A673 (cell line): ENCODE measurements at regions of chr4 and their contacts with region 1.

Region 1: GRCh38 chr4:175560604-175561003 is 251.5 kb downstream of the GPM6A start:
- DNase-seq: peak; percentile 48
- H3K4me3 ChIP-seq: no peak overlapping the region
- H3K27ac ChIP-seq: no peak overlapping the region
- H3K4me1 ChIP-seq: no peaks in the 10 kb centered on the region
- H3K27me3 ChIP-seq: peaks cover 6% of the 10 kb centered on the region
- CTCF ChIP-seq: peak; percentile 56

Region 2: DNA sequence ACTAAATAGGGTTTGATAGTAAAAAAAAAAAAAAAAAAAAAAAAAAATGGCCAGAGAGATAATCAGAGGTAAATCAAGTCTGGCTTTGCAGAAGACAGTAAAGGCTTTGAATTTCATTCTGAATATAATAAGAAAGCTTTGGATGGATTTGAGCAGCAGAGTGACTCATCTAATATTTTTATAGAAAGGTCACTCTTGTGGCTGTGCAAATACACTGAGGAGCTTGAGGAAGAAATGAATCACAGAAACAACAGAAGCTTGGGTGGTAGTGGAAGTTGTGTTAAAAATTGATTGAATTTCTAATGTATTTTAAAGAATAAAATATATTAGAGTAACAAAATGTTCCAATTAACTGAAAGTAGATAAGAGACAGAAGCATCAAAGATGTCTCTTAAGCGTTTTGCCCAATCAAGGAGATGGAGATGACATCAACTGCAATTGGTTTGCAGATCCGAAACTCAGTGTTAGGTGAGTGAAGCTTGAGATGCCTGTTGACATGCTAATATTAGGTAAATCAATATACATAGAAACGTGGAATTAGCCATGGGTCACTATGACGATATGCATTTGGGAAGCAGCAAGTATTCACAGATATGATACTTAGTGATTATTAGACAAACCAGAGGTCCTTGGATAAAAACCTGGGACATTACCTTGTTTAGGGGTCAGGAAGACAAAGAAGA is 29.1 kb before region 1 on chr4:
- CTCF ChIA-PET with region 1: no interaction called
- POLR2A ChIA-PET with region 1: no interaction called
- intact Hi-C with region 1: no loop called
- DNase-seq: no peak
- H3K4me3 ChIP-seq: no peak overlapping the region
- H3K27ac ChIP-seq: no peak overlapping the region
- H3K4me1 ChIP-seq: no peaks in the 10 kb centered on the region
- H3K27me3 ChIP-seq: no peaks in the 10 kb centered on the region
- CTCF ChIP-seq: no peak

Region 3: GRCh38 chr4:175791221-175791620 is 230.6 kb after region 1 on chr4:
- CTCF ChIA-PET with region 1: no interaction called
- POLR2A ChIA-PET with region 1: no interaction called
- intact Hi-C with region 1: no loop called
- DNase-seq: no peak
- H3K4me3 ChIP-seq: no peak overlapping the region
- H3K27ac ChIP-seq: no peak overlapping the region
- H3K4me1 ChIP-seq: no peaks in the 10 kb centered on the region
- H3K27me3 ChIP-seq: no peaks in the 10 kb centered on the region
- CTCF ChIP-seq: no peak

Region 4: DNA sequence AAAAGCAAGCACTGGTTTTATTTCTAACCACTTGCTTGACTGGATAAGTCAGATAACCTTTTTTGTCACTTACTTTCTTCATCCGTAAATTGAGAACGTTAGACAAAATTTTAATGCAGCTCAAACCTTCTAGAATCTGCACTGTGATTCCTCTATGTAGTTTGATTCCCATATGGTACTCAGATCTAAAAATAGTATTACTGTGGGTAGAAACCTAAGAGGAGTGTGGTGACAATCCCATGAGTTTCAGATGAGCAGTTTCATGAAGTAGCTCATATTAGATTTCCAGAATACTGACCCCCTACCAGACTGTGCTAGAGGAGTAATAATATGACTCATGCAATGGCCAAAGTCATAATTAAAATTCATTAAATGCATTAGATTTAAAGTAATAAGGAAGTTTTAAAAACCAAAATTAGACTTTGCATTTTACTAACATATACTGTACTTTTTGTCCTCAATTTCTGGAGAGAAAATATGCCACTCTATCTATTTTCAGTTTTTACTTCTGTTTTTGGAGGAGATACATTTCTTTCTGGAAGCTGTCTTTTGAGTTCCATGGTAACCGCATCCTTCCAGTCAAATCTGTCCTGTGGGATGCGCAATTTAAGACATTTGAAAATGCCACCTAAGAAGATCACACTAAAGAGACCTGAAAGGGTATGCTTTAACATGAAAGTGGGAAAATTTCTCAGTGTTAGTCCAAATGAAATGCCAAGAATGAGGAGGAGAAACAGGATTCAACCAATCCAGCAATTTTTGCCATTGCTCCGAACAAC is 315.6 kb after region 1 on chr4:
- CTCF ChIA-PET with region 1: no interaction called
- POLR2A ChIA-PET with region 1: no interaction called
- intact Hi-C with region 1: no loop called
- DNase-seq: no peak
- H3K4me3 ChIP-seq: no peak overlapping the region
- H3K27ac ChIP-seq: no peak overlapping the region
- H3K4me1 ChIP-seq: no peaks in the 10 kb centered on the region
- H3K27me3 ChIP-seq: no peaks in the 10 kb centered on the region
- CTCF ChIP-seq: no peak

Region 5: GRCh38 chr4:175891851-175892250 is 331.2 kb after region 1 on chr4:
- CTCF ChIA-PET with region 1: no interaction called
- POLR2A ChIA-PET with region 1: no interaction called
- intact Hi-C with region 1: loop called (anchors 1 kb)
- DNase-seq: peak; percentile 25
- H3K4me3 ChIP-seq: no peak overlapping the region
- H3K27ac ChIP-seq: no peak overlapping the region
- H3K4me1 ChIP-seq: no peaks in the 10 kb centered on the region
- H3K27me3 ChIP-seq: no peaks in the 10 kb centered on the region
- CTCF ChIP-seq: peak; percentile 52

Region 6: DNA sequence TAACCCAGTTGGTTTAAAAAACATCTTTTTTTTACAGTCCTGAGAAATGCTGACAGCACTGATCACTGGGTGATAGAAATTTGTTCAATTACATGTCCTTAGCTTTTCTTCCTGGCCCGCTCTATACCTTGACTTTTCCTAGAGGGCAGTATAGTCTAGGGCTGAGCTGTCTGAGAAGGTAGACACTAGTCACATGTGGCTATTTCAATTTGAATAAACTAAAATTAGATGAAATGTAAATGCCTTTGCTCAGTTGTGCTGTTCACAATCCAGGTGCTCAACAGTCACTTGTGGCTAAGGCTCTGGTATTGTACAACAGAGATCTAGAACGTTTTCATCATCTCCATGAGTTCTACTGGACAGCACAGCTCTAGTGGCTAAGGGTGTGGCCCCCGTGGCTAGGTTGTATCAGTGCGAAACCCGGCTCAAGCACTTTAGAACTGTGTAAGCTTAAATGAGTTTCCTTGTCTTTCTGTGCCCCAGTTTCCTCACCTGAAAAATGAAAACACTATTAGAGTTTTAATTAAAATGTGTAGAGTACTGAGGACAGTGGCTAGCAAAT is 393.4 kb after region 1 on chr4:
- CTCF ChIA-PET with region 1: no interaction called
- POLR2A ChIA-PET with region 1: no interaction called
- intact Hi-C with region 1: loop called (anchors 5 kb)
- DNase-seq: peak; percentile 17
- H3K4me3 ChIP-seq: no peak overlapping the region
- H3K27ac ChIP-seq: no peak overlapping the region
- H3K4me1 ChIP-seq: no peaks in the 10 kb centered on the region
- H3K27me3 ChIP-seq: no peaks in the 10 kb centered on the region
- CTCF ChIP-seq: peak; percentile 51

Region 7: DNA sequence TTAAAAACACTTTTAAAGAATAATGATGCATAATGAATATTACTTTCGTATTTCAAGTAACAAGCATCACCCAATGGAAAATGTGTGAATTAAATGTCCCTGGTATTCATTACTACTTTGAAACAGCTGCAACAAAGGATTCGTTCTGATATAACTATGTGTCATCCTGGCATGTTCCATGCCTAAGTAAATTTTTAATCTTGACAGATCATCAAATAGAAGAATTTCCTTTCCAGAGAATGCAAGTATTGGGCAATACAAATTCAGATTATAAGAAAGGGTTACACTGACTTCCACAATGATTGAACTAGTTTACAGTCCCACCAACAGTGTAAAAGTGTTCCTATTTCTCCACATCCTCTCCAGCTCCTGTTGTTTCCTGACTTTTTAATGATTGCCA is 864.4 kb after region 1 on chr4:
- CTCF ChIA-PET with region 1: no interaction called
- POLR2A ChIA-PET with region 1: no interaction called
- intact Hi-C with region 1: no loop called
- DNase-seq: no peak
- H3K4me3 ChIP-seq: no peak overlapping the region
- H3K27ac ChIP-seq: no peak overlapping the region
- H3K4me1 ChIP-seq: no peaks in the 10 kb centered on the region
- H3K27me3 ChIP-seq: peaks cover 15% of the 10 kb centered on the region
- CTCF ChIP-seq: no peak